AG04449 (cell line): ENCODE measurements at regions of chr1 and their contacts with region 1.

Region 1: GRCh38 chr1:208132287-208132883 is 111.8 kb downstream of the PLXNA2 start:
- DNase-seq: no peak
- H3K4me3 ChIP-seq: no peak overlapping the region
- CTCF ChIP-seq: peak; percentile 88

Region 2: GRCh38 chr1:207873055-207873890 is 259.1 kb before region 1 on chr1:
- CTCF ChIA-PET with region 1: no interaction called
- POLR2A ChIA-PET with region 1: no interaction called
- DNase-seq: no peak
- H3K4me3 ChIP-seq: no peak overlapping the region
- CTCF ChIP-seq: no peak

Region 3: GRCh38 chr1:208047975-208048374 is 84.4 kb before region 1 on chr1:
- CTCF ChIA-PET with region 1: no interaction called
- POLR2A ChIA-PET with region 1: no interaction called
- DNase-seq: no peak
- H3K4me3 ChIP-seq: no peak overlapping the region
- CTCF ChIP-seq: no peak

Region 4: DNA sequence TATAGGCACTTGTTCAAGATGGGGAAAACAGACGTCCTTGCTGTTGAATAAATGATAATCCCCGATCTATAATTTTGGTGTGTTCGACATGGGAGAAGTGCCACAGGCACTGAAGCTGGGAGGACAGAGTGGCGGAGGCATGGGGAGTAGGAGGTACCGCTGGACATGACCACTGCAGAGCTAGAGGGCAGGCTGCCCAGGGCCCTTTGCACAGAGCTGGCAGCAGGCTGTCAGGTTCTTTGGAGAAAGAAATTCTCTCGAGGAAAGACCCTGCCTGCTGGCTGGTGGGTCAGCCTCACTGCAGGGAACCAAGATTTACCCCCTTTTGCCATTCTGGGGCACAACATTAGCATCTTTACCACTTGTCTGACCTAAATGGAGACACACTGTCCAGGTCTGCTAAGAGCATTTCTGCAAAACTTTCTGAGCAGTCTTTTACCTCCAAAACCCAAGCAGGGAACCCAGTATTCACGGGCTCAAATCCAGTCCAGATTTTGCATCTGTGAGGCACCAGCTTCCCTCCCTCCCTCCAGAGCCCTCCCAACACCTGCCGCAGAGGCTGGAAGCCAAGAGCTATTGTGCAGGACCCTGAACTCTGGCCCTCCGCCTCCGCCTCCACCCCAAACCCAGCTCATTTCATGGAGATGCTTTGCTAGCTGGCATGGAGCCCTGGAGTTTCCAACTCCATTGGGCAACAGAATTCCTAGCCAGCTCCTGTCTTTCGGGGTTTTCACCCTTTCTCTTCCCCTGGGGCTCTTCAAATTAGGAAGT is 30.5 kb before region 1 on chr1:
- CTCF ChIA-PET with region 1: interaction called, 13 read pairs
- POLR2A ChIA-PET with region 1: no interaction called
- DNase-seq: no peak
- H3K4me3 ChIP-seq: no peak overlapping the region
- CTCF ChIP-seq: no peak

Region 5: GRCh38 chr1:208159555-208160258 is 27.3 kb after region 1 on chr1:
- CTCF ChIA-PET with region 1: interaction called, 24 read pairs
- POLR2A ChIA-PET with region 1: interaction called, 3 read pairs
- DNase-seq: peak; percentile 65
- H3K4me3 ChIP-seq: no peak overlapping the region
- CTCF ChIP-seq: no peak

Region 6: GRCh38 chr1:208172423-208173145 is 40.2 kb after region 1 on chr1:
- CTCF ChIA-PET with region 1: interaction called, 10 read pairs
- POLR2A ChIA-PET with region 1: no interaction called
- DNase-seq: no peak
- H3K4me3 ChIP-seq: no peak overlapping the region
- CTCF ChIP-seq: no peak

Region 7: GRCh38 chr1:208233546-208233945 is 101.2 kb after region 1 on chr1:
- CTCF ChIA-PET with region 1: interaction called, 242 read pairs
- POLR2A ChIA-PET with region 1: interaction called, 4 read pairs
- DNase-seq: no peak
- H3K4me3 ChIP-seq: no peak overlapping the region
- CTCF ChIP-seq: no peak